PC-3 (cell line): ENCODE measurements at regions of chr17 and their contacts with region 1.

Region 1: GRCh38 chr17:20852239-20852989 is 190.4 kb downstream of the USP22 start:
- DNase-seq: peak; percentile 35
- ATAC-seq: no peak
- H3K4me3 ChIP-seq: 0 out of 2 replicates have a peak overlapping the region, but pooled peaks have one; percentile 24
- H3K27ac ChIP-seq: no peak overlapping the region
- H3K4me1 ChIP-seq: no peaks in the 10 kb centered on the region
- H3K27me3 ChIP-seq: peaks cover 31% of the 10 kb centered on the region
- CTCF ChIP-seq: no peak

Region 2: DNA sequence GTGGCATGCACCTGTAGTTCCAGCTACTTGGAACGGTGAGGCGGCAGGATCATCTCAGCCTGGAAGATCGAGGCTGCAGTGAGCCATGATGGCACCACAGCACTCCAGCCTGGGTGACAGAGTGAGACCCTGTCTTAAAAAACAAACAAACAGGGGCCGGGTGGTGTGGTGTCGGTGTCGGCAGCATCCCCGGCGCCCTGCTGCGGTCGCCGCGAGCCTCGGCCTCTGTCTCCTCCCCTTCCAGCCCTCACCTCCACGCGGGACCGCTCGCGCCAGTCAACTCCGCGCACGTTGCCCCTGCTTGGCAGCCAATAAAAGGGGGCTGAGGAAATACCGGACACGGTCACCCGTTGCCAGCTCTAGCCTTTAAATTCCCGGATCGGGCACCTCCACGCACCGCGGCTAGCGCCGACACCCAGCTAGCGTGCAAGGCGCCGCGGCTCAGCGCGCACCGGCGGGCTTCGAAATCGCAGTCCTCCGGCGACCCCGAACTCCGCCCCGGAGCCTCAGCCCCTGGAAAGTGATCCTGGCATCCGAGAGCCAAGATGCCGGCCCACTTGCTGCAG is 68.2 kb before region 1 on chr17:
- CTCF ChIA-PET with region 1: no interaction called
- POLR2A ChIA-PET with region 1: no interaction called
- intact Hi-C with region 1: no loop called
- DNase-seq: no peak
- ATAC-seq: no peak
- H3K4me3 ChIP-seq: no peak overlapping the region
- H3K27ac ChIP-seq: no peak overlapping the region
- H3K4me1 ChIP-seq: no peaks in the 10 kb centered on the region
- H3K27me3 ChIP-seq: peaks cover 30% of the 10 kb centered on the region
- CTCF ChIP-seq: no peak

Region 3: GRCh38 chr17:20800146-20800545 is 52.3 kb before region 1 on chr17:
- CTCF ChIA-PET with region 1: no interaction called
- POLR2A ChIA-PET with region 1: no interaction called
- intact Hi-C with region 1: loop called (anchors 2 kb)
- DNase-seq: no peak
- ATAC-seq: no peak
- H3K4me3 ChIP-seq: no peak overlapping the region
- H3K27ac ChIP-seq: no peak overlapping the region
- H3K4me1 ChIP-seq: peaks cover 9% of the 10 kb centered on the region; the same call in 1 of the 2 replicates
- H3K27me3 ChIP-seq: no peaks in the 10 kb centered on the region
- CTCF ChIP-seq: no peak